ENCODE measurements at regions of chr2 and their contacts with region 1.

Region 1: DNA sequence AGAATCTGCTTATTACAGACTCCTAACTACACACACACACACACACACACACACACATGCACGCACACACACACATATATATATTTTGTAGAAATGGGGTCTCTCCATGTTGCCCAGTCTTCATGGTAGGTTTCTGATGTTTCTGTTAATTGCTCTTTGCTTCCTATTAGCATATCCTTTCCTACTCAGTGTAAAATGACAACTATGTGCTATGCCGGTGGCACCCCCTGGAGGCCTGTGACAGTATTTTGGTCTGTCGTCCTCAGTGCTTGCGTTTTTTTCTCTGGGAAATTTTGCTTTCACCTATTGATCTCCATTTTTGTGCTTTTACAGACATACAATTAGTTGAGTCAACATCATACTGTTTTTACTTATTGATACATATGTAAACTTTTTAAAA is 322.1 kb downstream of the LRRTM1 start:
- DNase-seq: no peak
- ATAC-seq: no peak

Region 2: DNA sequence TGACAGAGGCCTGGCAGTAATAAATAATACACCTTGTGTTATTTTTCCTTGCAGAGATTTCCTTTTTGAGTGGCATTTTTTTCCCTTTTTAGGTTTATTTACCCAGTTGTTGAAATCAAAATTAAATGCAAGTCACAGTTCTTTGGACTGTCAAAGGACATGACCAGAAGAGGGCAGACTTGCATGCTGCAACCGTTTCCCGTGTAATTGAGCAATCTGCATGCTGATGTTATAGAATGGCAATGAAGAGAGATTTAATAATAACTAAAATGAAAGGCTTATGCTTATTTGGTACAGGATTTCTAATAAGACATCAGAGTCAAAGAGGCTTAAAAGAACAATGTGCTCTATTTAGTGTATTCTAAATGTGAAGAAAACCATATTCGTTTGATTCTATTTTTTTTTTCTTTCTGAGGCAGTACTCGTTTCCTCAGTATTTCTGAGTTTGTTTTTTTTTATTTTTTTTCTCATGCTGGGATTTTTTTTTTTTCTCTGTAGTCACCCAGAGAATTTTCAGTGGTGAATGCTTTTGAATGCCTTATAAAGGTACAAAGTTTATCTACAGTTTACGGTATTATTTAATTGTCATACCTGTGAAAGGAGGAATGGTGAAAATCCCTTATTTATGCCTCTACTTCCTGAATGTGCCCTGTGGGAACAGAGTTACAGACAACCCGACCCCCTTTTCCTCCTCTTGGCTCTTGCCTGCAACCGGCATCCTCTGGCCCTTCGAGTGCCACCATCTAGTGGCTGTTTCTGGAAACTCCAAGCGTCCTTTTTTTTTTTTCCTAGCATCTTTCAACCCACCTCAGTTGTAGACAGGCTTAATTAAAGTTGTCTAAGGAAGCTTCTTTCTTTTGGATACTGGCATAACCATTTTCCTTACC is 46.4 kb before region 1 on chr2:
- intact Hi-C with region 1: loop called (anchors 5 kb)
- DNase-seq: no peak
- ATAC-seq: peak; percentile 62

Region 3: GRCh38 chr2:80238692-80239469 is 256.4 kb after region 1 on chr2:
- intact Hi-C with region 1: no loop called
- DNase-seq: no peak
- ATAC-seq: peak; percentile 62

Measured in Right ventricle myocardium inferior (tissue), 1 donor.